ENCODE measurements at regions of chr11 and their contacts with region 1.

Region 1: DNA sequence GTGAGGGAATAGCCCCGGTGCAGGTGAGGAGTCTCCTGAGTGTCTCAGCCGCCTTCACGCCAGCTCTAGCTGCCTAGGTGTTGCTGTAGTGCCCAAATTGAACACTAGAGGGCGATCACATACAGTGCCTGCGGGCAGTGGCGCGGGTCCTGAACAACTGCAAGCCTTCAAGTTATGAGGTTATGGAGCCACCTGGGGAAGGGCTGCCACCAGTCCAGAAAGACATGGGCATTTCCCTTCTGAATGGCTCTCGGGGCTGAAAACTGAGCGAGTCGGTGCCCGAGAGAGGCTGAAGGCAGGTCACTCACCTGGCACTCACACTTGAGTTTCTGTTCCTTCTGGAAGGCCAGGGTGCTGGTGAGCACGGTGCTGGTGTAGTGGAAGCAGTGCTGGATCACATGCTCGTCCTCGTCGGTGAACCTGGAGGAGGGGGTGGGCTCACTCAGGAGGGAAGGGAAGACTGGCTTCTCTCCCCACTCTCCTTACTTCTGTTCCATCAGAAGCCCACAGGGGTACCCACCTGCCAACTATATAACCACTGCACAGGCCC is 88.4 kb downstream of the PDE2A start:
- DNase-seq: peak; percentile 85

Region 2: GRCh38 chr11:72244361-72245262 is 341.2 kb before region 1 on chr11:
- CTCF ChIA-PET with region 1: no interaction called
- POLR2A ChIA-PET with region 1: no interaction called
- DNase-seq: no peak

Region 3: DNA sequence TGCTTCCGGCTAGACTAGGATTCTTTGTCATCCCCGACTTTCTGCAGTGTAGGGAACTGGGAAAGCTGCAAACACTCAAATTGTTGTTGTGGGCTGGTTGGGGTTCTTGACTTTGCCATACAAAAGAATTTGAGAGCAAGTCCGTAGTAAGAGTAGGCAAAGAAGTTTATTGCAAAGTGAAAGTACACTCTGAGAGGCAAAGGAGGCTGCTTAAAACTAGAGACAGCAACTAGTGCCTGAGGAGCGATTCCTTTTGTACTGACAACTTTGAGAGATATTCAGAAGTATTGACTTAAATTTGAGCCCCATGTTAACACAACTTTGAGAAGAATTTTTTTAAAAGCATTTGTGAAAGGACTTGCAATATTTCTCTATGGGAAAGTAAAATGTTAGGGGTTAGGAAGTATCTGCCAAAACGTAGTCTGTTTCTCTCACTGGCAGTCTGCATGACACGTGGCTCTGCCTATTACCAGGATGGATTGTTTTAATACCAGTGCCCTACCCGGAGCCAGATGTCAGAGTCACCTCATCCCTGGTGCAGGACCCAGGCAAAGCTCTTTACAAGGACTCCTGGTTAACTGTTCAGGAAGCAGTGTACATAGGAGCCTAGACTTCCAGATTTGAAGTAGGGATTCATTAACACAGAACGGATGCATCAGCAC is 66.5 kb before region 1 on chr11:
- CTCF ChIA-PET with region 1: no interaction called
- POLR2A ChIA-PET with region 1: no interaction called
- DNase-seq: no peak

Region 4: GRCh38 chr11:72553706-72554105 is 32.1 kb before region 1 on chr11:
- CTCF ChIA-PET with region 1: no interaction called
- POLR2A ChIA-PET with region 1: no interaction called
- DNase-seq: no peak

Region 5: DNA sequence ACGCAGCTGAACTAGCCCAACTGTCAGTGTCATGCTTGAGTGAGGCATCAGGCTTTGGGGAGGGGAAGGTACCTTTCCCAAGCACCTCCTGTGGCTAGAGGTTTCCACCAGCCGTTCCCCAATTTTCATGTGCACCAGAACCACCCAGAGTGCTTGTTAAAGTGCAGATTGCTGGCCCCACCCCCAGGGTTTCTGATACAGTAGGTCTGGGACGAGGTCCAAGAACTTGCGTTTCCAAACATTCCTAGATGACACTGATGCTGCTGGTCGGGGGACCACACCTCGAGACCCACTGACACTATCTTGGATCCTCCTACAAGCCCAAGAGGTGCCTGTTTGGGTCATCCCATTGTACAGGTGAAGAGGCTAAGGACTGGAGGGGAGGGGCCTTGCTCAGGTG is 28.5 kb after region 1 on chr11:
- CTCF ChIA-PET with region 1: no interaction called
- POLR2A ChIA-PET with region 1: no interaction called
- DNase-seq: no peak

Region 6: DNA sequence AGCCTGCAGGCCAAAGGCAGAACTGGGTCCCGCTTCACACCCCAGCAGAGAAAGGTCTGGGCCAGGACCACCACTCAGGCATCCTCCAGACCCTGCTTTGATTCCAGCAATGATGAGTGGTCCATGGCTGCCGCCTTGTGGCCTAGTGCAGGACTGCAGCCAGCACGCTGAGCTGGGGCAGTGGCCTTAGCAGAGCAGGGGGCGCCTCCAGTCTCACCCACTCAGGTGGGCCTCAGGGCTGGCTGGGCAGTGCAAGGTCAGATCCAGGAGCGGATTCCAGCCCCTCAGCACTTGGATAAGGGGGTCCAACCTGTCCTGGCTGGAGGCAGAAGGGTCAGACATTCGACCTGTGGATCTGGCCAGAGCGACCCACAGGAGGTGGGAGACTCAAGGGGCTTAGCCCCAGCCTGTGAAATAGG is 98.0 kb after region 1 on chr11:
- CTCF ChIA-PET with region 1: interaction called, 33 read pairs
- POLR2A ChIA-PET with region 1: interaction called, 4 read pairs
- DNase-seq: peak; percentile 82